A549 (cell line): ENCODE measurements at regions of chrX and their contacts with region 1.

Region 1: GRCh38 chrX:71181910-71182799 is 37.5 kb downstream of the NLGN3 start:
- DNase-seq: peak; percentile 85 to 98
- ATAC-seq: peak; percentile 97 to 98
- H3K4me3 ChIP-seq: peak overlapping the region; percentile 51
- H3K27ac ChIP-seq: peak overlapping the region; percentile 89 to 92
- H3K4me1 ChIP-seq: peaks cover 10% of the 10 kb centered on the region; the same call in 1 of the 3 replicates
- CTCF ChIP-seq: no peak
- EP300 ChIP-seq: no peak
- POLR2A ChIP-seq: peak; percentile 69
- RAD21 ChIP-seq: no peak

Region 2: DNA sequence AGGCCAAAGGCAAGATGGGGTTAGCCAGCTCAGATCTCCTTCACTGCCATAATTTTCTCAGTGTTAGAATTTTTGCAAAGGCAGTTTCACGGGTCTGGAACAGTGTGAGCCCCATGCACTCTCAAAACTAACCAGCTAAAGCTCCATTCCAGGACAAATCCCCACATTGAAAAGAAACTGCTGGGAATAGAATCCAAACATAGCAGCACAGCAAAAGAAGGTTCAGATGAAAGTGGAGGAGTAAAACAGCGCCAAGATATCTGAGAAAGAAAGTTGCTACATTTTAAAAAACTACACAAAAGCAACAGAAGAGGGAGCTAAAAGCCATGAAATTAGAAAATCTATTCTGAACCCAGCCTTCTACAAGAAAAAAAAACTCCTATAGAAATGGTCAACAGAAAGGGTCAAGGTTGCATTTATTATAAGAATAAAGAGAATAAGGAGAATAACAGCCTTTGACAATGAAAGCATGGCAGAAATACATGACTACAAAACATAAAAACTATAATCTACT is 211.6 kb before region 1 on chrX:
- CTCF ChIA-PET with region 1: interaction called, 35 read pairs
- POLR2A ChIA-PET with region 1: no interaction called
- DNase-seq: peak; percentile 6 to 13
- ATAC-seq: peak in 1 of 2 experiments; percentile 50; a peak in 3 of 6 replicates
- H3K4me3 ChIP-seq: no peak overlapping the region
- H3K27ac ChIP-seq: no peak overlapping the region
- H3K4me1 ChIP-seq: no peaks in the 10 kb centered on the region
- CTCF ChIP-seq: peak; percentile 42
- EP300 ChIP-seq: no peak
- POLR2A ChIP-seq: no peak
- RAD21 ChIP-seq: peak; percentile 50 to 59; a peak in 4 of 5 replicates

Region 3: DNA sequence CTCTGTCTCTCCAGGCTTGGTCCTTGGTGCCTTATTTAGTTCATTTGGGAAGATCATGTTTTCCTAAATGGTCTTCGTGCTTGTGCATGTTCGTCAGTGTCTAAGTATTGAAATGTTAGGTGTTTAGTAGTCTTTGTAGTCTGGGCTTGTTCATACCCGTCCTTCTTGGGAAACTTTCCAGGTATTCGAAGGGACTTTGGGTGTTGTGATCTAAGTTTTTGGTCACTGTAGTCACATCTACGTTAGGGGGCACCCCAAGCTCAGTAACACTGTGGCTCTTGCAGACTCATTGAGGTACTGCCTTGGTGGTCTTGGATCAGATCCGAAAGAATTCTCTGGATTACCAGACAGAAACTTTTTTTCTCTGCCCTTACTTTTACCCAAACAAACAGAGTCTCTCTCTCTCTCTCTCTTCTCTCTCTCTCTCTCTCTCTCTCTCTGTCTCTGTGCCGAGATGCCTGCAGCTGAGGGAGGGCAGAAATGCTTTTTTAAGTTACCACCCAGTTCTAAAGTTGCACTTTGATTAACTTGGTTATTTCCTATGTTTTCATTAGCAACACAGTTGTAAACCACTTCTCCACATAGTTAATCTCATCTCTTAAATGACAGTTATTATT is 183.6 kb before region 1 on chrX:
- CTCF ChIA-PET with region 1: interaction called, 17 read pairs
- POLR2A ChIA-PET with region 1: no interaction called
- DNase-seq: peak in 1 of 2 experiments; percentile 54
- ATAC-seq: peak in 1 of 2 experiments; percentile 75; a peak in 3 of 6 replicates
- H3K4me3 ChIP-seq: no peak overlapping the region
- H3K27ac ChIP-seq: no peak overlapping the region
- H3K4me1 ChIP-seq: no peaks in the 10 kb centered on the region
- CTCF ChIP-seq: peak; percentile 55
- EP300 ChIP-seq: no peak
- POLR2A ChIP-seq: no peak
- RAD21 ChIP-seq: peak; percentile 66 to 70

Region 4: DNA sequence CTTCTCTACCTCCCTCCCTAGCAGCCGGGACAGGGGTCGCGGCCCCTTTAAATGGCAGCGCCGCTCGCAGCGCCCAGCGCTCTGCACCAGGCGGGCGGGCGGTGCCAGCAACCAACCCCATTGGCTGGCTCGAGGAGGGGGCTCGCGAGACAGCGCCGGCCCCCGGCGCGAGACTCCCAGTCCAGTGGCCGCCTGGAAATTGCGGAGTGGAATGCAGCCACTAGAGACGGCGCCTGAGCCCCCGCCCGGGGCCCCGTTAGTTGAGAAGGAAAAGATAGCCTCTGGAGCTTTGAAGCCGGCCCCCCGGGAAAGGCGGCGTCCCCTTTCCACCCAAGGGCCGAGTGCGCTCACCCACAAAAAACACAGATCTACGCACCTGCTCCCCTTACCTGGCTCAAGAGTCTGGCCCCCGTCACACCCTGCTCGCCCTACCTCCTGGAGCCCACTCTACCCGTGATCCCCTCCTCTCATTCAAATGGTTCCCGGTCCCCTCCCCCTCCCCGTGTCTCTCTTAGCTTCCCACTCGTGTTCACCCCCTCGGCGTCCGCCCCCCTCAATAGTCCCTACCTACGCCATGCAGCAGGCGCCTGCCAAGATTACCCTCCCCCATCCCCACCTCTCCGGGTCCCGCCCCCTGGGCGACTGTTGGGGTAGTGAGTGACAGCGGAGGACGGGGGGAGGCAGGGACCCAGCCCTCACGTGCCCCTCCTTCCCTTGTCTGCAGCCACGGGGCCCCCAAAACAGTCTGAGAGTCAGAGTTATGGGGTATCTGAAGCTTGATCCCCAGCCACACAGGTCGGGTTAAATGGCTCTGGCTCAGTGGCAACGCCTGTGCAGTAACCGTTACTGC is 72.2 kb after region 1 on chrX and contains the start of gene ZMYM3:
- CTCF ChIA-PET with region 1: interaction called, 3 read pairs
- POLR2A ChIA-PET with region 1: interaction called, 13 read pairs
- DNase-seq: peak; percentile 85
- ATAC-seq: peak; percentile 91 to 96
- H3K4me3 ChIP-seq: peak within 1 kb of the TSS; percentile 91
- H3K27ac ChIP-seq: peak within 1 kb of the TSS; percentile 98 to 99
- H3K4me1 ChIP-seq: peaks cover 23% of the 10 kb centered on the region
- CTCF ChIP-seq: no peak
- EP300 ChIP-seq: no peak
- POLR2A ChIP-seq: no peak; the same call in 1 of the 2 replicates
- RAD21 ChIP-seq: no peak
- polyA plus RNA-seq, gene ZMYM3: 18.8 and 23.2 TPM in 2 replicates

Region 5: DNA sequence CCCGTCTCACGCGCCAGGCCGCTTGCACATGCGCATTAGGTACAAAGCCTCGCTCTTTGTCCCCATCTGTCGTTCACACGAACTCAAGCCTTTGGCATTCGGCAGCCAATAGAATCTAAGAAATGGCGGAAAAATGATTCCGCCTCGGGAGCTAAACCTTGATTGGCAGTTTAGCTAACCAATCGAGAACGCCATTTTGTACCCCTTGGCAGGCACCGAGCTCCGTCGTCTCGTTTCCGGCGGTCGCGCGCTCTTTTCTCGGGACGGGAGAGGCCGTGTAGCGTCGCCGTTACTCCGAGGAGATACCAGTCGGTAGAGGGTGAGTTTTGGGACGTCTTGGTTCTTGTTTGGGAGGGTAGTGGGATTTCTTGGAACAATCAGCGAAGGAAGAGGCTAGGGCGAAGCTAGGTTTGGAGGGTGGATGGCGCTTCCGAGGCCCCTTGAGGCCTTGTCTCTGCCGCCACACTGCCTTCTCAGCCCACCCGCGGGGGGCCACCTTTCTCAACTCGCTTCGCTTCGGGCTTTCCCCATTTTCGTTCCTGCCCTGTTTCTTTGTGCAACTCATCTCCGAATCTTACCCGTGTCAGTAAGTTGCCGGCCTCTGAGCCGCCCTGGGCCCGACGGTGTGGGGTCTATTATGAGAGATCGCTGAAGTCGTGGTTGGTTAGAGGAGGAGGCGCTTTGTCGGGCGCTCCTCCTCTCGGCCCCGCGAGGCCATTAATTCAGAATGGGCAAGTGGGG is 101.4 kb after region 1 on chrX and contains the start of gene NONO:
- CTCF ChIA-PET with region 1: no interaction called
- POLR2A ChIA-PET with region 1: interaction called, 21 read pairs
- DNase-seq: peak; percentile 81 to 99
- ATAC-seq: peak; percentile 94 to 95
- H3K4me3 ChIP-seq: peak within 1 kb of the TSS; percentile 58
- H3K27ac ChIP-seq: peak within 1 kb of the TSS; percentile 82 to 97
- H3K4me1 ChIP-seq: peaks cover 22% of the 10 kb centered on the region
- CTCF ChIP-seq: no peak
- EP300 ChIP-seq: no peak
- POLR2A ChIP-seq: peak; percentile 49
- RAD21 ChIP-seq: no peak
- polyA plus RNA-seq, gene NONO: 362 and 631 TPM in 2 replicates

Region 6: DNA sequence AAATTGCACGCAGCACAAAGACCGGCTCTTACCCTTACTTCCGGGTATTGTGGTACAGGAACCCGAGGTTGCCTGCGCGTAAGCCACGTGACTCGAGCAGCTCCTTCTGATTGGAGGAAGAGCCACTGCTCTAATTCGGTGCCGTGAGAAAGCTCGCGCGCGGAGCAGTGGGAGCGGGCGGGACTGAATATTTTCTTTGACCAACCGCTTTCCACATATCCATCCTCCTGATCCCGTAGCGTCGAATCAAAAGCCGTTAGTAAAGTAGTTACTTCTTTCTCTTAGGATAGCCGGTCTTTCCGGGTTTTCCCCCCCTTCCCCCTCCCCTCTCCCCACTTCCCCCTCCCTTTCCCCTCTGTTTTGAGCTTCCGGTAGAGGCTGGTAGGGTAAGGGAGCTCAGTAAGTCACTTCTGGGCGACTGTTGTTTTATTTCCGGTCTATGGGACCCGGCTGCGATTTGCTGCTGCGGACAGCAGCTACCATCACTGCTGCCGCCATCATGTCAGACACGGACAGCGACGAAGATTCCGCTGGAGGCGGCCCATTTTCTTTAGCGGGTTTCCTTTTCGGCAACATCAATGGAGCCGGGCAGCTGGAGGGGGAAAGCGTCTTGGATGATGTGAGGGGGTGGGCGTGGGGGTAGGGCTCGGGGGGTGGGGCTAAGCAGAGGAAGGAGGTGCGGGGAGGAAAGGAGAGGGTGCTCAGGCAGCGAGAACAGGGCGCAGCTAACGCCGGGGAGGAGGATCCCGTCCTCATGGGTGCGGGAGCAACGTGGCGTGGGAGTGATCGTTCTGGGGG is 183.9 kb after region 1 on chrX and contains the start of gene TAF1:
- CTCF ChIA-PET with region 1: no interaction called
- POLR2A ChIA-PET with region 1: interaction called, 26 read pairs
- DNase-seq: peak; percentile 97 to 98
- ATAC-seq: peak; percentile 96 to 97
- H3K4me3 ChIP-seq: peak within 1 kb of the TSS; percentile 96
- H3K27ac ChIP-seq: peak within 1 kb of the TSS; percentile 97
- H3K4me1 ChIP-seq: peaks cover 11% of the 10 kb centered on the region
- CTCF ChIP-seq: no peak
- EP300 ChIP-seq: no peak
- POLR2A ChIP-seq: peak; percentile 82; the same call in 1 of the 2 replicates
- RAD21 ChIP-seq: no peak
- polyA plus RNA-seq, gene TAF1: 29.7 and 31.3 TPM in 2 replicates